PC-9 (cell line): ENCODE measurements at regions of chr2 and their contacts with region 1.

Region 1: DNA sequence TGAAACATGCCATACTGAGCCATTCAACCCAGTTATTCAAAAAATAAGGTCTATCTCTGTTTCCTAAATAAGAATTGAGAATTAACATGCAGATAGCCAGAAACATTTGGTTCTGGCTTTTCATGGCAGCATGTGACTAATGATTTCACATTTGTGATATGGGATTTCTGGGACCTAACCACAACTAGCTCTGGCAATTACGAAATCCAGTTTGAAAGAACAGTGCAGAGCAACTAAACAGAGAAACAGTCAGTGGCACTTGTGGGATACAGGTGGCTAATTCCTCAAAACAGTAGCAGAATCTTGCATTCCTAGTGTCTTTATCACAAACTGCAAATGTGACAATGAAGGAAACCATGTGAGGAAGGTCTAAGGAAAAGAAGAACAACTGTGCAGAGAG is 637.8 kb upstream of the CHAC2 start:
- DNase-seq: peak; percentile 41 to 78
- H3K4me3 ChIP-seq: no peak overlapping the region
- H3K27ac ChIP-seq: peak overlapping the region; percentile 29; the same call in 1 of the 2 replicates
- H3K4me1 ChIP-seq: peaks cover 28% of the 10 kb centered on the region
- H3K27me3 ChIP-seq: no peaks in the 10 kb centered on the region
- CTCF ChIP-seq: no peak

Region 2: DNA sequence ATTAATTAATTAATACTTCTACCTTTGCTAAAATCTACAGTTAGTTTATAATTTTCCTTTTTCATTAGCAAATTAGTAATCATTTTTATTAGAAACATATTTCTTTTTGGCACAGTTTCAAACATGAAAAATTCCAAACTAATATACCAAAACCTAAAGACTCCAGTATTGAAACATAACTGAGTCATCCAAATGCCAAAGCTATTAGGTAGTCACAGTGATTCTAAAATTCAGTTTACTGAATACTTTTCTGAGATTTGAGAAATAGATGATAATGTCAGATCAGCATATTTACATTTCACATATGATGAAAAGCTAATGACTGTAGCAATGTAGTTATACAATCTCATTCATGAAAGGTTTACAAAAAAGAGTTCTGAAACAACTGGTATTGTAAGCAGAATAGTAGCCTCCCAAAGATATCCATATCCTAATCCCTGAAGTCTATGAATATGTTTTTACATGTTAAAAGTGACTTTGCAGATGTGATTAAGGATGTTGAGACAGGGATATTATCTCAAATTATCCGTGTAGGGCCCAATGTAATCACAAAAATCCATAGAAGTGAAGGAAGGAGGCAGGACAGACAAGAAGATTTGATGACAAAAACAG is 42.5 kb before region 1 on chr2:
- CTCF ChIA-PET with region 1: no interaction called
- POLR2A ChIA-PET with region 1: no interaction called
- intact Hi-C with region 1: loop called (anchors 1 kb)
- DNase-seq: peak in 1 of 2 experiments; percentile 52
- H3K4me3 ChIP-seq: no peak overlapping the region
- H3K27ac ChIP-seq: 0 out of 2 replicates have a peak overlapping the region, but pooled peaks have one; percentile 7
- H3K4me1 ChIP-seq: peaks cover 12% of the 10 kb centered on the region
- H3K27me3 ChIP-seq: no peaks in the 10 kb centered on the region
- CTCF ChIP-seq: no peak

Region 3: DNA sequence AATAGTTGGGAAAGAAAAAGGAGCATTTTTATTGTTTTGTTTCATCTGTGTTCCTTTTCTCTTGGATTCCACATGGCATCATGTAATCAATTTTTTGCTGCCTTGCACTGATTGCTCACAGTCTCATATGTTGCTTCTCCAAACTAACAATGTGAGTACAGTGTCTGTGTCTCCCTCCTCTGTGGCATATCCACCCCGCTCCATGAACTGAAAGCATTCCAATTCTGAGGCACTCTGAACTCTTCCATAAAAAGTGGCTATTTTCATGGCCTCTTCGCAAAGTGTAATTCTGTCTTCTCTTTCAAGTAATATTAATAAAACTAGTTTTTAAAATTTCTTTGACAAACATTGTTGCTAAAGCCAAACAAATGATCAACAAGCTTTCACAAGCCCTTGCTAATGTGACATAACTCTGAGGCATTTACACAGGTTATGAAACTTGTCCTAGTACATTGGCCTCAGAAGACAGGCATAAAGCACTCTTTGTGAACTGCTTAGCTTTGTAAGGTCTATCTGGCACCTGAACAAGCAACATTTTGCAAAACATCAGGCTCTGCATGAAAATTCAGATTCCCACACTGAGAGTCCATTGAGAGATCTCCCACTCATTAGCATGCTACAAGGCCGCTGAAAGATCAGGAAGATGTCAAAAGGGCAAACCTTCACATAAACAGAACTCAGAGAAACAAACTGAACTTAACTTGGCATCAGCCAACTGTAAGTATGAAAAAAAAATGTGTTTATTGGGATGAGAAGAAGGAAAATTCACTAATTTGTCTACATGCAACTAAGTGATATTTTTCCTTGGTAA is 696.9 kb after region 1 on chr2:
- CTCF ChIA-PET with region 1: no interaction called
- POLR2A ChIA-PET with region 1: no interaction called
- intact Hi-C with region 1: no loop called
- DNase-seq: peak in 1 of 2 experiments; percentile 39
- H3K4me3 ChIP-seq: no peak overlapping the region
- H3K27ac ChIP-seq: no peak overlapping the region
- H3K4me1 ChIP-seq: no peaks in the 10 kb centered on the region
- H3K27me3 ChIP-seq: no peaks in the 10 kb centered on the region
- CTCF ChIP-seq: no peak